Activated CD4-positive, alpha-beta T cell treated with anti-CD3 and anti-CD28 coated beads, Interleukin-2, amount 10 ng/mL, durations not matched to agents 24 days and 14 days (primary cell): ENCODE measurements at regions of chr22 and their contacts with region 1.

Region 1: GRCh38 chr22:38755911-38756532 is at the start of gene SUN2:
- DNase-seq: peak; percentile 99
- H3K4me3 Mint-ChIP-seq: peak within 1 kb of the TSS; percentile 95
- H3K27ac Mint-ChIP-seq: peak within 1 kb of the TSS; percentile 100
- H3K4me1 Mint-ChIP-seq: peaks cover 56% of the 10 kb centered on the region
- H3K27me3 Mint-ChIP-seq: no peaks in the 10 kb centered on the region
- total RNA-seq, gene SUN2: 124 and 128 TPM in 2 replicates

Region 2: GRCh38 chr22:38705235-38706100 is 50.6 kb before region 1 on chr22 and contains the start of gene GTPBP1:
- intact Hi-C with region 1: loop called (anchors 1 kb)
- DNase-seq: peak; percentile 99
- H3K4me3 Mint-ChIP-seq: peak within 1 kb of the TSS; percentile 81
- H3K27ac Mint-ChIP-seq: peak within 1 kb of the TSS; percentile 98
- H3K4me1 Mint-ChIP-seq: peaks cover 54% of the 10 kb centered on the region
- H3K27me3 Mint-ChIP-seq: peaks cover 4% of the 10 kb centered on the region
- total RNA-seq, gene GTPBP1: 102 and 103 TPM in 2 replicates

Region 3: DNA sequence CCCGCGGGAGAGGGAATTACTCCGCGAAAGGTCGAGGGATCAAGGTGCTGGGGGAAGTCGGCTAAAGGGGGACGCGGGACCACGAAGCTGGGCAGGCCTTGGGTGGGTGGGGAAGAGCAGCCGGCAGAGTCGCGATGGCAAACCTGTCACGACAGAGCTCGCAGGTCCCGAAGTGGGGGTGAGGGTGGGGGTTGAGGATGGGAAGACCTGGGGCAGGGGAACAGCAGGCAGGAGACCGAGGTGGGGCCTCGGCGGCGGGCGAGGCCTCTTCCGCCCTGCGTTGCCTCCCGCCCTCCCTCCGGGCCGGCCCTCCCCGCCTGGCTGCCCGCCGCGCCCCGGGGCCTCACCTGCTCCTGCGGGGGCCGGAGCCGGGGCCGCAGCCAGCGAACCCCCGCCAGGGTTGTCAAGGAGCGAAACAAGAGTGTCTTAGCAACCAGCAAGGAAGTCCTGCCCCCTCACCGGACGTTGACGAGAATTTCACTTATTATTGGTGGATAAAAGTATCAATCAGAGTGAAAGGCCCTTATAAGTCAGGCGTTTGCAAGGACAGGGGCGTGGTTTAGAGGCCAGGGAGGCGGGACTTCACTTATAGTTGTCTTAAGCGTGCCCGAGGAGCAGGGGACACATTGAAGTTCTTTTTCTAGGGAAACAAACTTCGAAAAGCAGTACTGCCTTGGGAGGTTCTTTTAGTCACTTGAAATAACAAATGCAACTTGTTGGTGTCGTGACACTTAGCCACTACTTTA is 37.9 kb after region 1 on chr22 and contains the start of gene DNAL4:
- intact Hi-C with region 1: loop called (anchors 2 kb)
- DNase-seq: peak; percentile 98
- H3K4me3 Mint-ChIP-seq: peak within 1 kb of the TSS; percentile 87
- H3K27ac Mint-ChIP-seq: peak within 1 kb of the TSS; percentile 80
- H3K4me1 Mint-ChIP-seq: peaks cover 16% of the 10 kb centered on the region
- H3K27me3 Mint-ChIP-seq: peaks cover 10% of the 10 kb centered on the region
- total RNA-seq, gene DNAL4: 5.5 and 6.3 TPM in 2 replicates

Region 4: DNA sequence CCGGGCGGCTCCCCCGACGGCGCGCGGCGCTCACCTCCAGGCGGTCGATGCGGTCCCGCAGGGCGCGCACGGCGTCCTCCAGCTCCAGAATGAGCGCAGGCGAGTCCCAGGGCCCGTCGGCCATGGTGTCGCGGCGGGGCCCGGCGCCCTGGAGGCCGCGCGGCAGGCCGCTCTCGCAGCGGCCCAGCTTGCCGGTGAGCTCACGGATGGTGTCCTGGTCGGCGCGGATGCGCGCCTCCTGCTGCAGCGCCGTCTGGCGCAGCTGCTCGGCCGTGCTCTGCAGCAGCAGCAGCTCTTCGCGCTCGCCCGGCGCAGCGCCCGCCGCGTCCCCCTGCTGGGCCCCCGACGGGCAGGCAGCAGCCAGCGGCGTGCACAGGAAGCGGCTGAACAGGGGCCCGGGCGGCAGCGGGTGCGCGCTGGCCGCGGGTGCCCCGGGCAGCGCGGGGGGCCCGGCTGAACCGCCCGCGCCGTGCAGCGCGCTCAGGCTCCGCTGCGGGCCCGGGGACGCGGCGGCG is 87.2 kb after region 1 on chr22:
- intact Hi-C with region 1: loop called (anchors 5 kb)
- DNase-seq: peak; percentile 86
- H3K4me3 Mint-ChIP-seq: no peak overlapping the region
- H3K27ac Mint-ChIP-seq: no peak overlapping the region
- H3K4me1 Mint-ChIP-seq: peaks cover 8% of the 10 kb centered on the region
- H3K27me3 Mint-ChIP-seq: peaks cover 62% of the 10 kb centered on the region